Right ventricle myocardium inferior (tissue), 1 donor: ENCODE measurements at regions of chr20 and their contacts with region 1.

Region 1: DNA sequence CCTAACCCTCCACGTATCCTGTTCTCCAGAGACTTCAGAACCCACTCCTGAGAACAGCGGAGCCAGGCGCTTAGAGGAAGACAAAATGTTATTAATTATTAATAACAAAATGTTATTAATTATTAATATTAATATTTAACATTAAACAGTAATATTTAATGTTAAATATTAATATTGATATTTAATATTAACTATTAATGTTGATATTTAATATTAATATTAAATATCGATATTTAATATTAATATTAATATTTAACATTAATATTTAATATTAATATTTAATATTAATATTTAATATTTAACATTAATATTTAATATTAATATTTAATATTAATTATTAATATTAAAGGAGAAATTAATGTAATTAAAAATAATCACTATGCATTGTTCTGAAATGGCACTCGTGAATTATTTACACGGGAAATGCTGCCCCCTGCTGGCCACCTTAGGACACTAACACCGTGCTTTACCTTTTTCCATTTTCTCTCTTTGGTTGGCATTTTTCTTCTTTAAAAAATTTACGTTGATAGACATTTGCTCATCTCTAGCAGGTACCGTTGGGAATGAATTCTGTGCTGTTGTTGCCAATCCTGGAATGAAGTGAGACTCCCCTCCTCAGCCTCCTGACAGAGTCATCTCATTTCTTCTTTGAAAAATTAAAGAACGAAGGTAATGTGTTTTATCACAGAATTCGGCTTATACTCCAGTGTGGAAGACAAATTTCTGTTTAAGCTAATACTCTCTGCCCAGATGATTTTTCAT is 7.5 kb upstream of the GGTLC1 start:
- DNase-seq: no peak
- ATAC-seq: no peak

Region 2: GRCh38 chr20:23668477-23668951 is 327.6 kb before region 1 on chr20:
- intact Hi-C with region 1: loop called (anchors 5 kb)
- DNase-seq: no peak
- ATAC-seq: peak; percentile 69

Region 3: DNA sequence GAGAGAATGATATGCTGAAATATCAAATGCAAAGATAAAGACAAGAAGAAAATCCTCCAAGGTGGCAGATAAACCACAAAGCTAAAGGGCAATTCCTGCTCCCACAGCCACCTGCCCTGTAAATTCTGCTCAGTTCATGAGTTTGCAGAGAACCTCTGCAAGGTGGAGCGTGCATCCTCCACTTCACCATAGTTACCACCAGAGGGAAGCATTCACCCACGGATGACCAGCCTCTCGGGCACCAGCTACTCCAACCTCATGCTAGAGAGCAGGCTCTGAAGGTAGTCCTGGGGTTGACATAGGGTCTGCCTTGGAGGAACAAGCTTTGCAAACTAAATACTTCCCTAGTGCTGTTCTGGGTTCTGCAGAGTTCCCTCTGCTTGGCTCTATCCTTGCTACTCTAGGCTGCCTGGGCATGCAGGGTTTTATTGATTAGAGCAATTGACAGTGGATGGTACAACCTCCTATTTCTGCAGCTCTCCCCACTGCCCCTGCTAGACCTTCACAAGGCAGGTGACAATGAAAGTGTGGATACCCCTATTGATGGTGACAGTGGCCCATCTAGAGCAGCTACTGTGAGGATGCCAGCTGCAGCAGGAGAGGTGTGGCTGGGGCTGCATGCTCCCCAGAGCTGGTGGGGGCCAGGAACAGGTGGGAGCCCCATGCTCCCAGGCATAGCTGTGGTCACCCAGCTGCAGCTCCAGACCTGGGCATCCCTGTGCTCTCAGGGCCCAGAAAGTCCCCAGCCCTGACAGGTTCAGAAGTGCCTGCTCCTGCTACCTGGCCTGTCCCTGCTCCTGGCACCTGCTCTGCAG is 58.6 kb before region 1 on chr20:
- intact Hi-C with region 1: loop called (anchors 5 kb)
- DNase-seq: no peak
- ATAC-seq: peak; percentile 93